Calu3 (cell line): ENCODE measurements at regions of chr1 and their contacts with region 1.

Region 1: DNA sequence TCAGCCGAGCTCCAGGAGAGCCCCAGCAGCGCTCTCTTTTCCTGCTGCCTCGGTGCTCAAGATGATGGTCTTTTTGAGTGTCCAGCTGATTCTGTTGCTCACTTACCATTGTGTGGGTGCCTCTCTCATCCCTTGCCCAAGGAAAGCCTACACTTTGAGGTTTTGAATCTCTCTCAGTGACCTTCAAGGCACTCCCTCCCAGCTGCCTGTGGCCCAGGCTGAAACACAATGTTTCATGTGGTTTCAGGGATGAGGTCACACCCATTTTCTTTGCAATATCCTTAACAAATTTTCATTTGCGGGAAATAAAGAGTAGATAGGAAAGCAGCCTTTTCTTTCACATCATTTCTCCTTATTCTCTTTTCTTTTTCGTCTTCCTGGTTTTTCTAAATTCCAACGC is 12.6 kb upstream of the MRPS14 start:
- DNase-seq: no peak
- H3K4me3 Mint-ChIP-seq: no peak overlapping the region
- H3K27ac Mint-ChIP-seq: no peak overlapping the region
- H3K4me1 Mint-ChIP-seq: no peaks in the 10 kb centered on the region
- H3K27me3 Mint-ChIP-seq: peaks cover 89% of the 10 kb centered on the region
- CTCF ChIP-seq: no peak

Region 2: DNA sequence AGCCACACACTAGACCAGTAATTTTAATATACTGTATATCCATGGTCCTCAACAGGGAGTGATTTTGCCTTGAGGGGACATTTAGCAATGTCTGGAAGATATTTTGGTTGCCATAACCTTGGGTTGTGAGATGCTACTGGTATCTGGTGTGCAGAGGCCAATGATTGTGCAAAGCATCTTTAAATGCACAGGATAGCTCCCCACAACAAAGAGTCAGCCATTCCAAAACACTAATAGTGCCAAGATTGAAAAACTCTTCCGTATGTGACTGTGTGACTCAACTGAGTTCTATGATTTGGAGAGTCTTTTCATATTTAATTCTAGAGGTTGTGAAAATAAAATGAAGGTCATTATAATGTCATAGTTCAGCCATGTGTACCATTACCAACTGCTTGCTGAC is 177.6 kb before region 1 on chr1:
- CTCF ChIA-PET with region 1: no interaction called
- intact Hi-C with region 1: no loop called
- DNase-seq: no peak
- H3K4me3 Mint-ChIP-seq: no peak overlapping the region
- H3K27ac Mint-ChIP-seq: no peak overlapping the region
- H3K4me1 Mint-ChIP-seq: no peaks in the 10 kb centered on the region
- H3K27me3 Mint-ChIP-seq: no peaks in the 10 kb centered on the region
- CTCF ChIP-seq: no peak

Region 3: DNA sequence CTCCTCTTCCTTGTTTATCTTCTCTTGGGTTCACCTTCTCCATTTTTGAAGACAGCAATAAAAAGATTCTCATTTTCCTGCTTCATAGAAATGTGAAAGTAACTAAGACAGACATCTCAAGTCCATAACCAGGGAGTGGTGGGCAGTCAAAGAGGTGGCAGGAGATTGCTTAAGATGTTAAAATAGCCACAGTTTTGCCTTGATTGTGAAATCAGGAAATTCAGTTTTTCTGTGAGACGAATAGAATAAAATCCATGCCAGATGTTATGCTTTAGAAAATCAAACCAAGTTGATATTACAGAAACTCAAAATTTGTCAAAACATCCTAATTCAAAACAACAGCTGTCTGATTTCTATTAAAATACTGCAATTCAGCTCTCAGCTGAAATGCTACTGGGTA is 89.0 kb after region 1 on chr1:
- CTCF ChIA-PET with region 1: interaction called, 14 read pairs
- intact Hi-C with region 1: no loop called
- DNase-seq: no peak
- H3K4me3 Mint-ChIP-seq: no peak overlapping the region
- H3K27ac Mint-ChIP-seq: no peak overlapping the region
- H3K4me1 Mint-ChIP-seq: no peaks in the 10 kb centered on the region
- H3K27me3 Mint-ChIP-seq: peaks cover 42% of the 10 kb centered on the region
- CTCF ChIP-seq: no peak

Region 4: DNA sequence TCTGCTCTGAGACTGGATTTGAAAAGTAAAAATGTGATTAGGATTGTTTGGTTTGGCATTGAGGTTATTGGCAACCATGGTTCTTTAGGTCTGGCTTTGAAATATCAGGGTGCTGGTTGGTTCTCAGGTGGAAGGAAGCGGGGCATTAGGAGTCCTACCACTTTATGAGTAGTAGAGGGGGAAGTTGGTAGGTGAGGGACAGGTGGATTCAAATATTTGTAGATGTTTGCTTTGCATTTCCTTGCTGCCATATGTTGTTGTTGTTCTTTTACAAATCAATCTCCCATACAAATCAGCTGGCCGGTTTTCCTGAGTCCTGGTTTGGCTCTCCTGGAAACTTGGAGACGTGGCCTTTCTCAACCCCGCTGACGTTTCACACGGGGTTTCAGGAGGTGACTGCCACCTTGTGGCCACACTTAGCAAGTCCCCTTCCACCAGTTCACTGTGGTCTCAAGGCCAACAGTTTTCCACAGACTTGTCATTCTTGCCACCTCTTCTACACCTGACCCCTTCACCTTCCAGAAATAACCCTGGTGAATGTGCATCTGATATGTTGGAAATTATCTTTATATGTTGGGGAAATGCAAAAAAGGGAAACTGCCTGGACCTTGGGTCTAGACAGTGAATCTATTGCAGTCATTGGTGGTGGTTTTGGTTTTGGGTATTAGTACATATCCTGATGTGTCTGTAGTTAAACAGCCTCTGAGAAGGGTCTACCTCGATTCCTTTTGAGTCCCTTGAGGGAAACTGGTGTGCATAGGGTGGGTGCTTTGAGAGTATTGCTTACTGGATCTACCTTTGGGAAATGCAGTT is 283.8 kb after region 1 on chr1:
- CTCF ChIA-PET with region 1: no interaction called
- intact Hi-C with region 1: loop called (anchors 10 kb)
- DNase-seq: peak; percentile 77
- H3K4me3 Mint-ChIP-seq: no peak overlapping the region
- H3K27ac Mint-ChIP-seq: no peak overlapping the region
- H3K4me1 Mint-ChIP-seq: peaks cover under 1% of the 10 kb centered on the region
- H3K27me3 Mint-ChIP-seq: peaks cover 30% of the 10 kb centered on the region
- CTCF ChIP-seq: peak; percentile 88